Naive thymus-derived CD4-positive, alpha-beta T cell (primary cell): ENCODE measurements at regions of chr21 and their contacts with region 1.

Region 1: GRCh38 chr21:35051287-35051818 is 2.3 kb upstream of the RUNX1 start:
- DNase-seq: peak; percentile 61 to 85 (median 80)
- ATAC-seq: peak; percentile 74
- H3K4me3 ChIP-seq: no peak overlapping the region
- H3K4me3 Mint-ChIP-seq: peak overlapping the region; percentile 70 to 99 (median 94)
- H3K27ac ChIP-seq: peak overlapping the region; percentile 38
- H3K27ac Mint-ChIP-seq: peak overlapping the region; percentile 80 to 100 (median 98)
- H3K4me1 ChIP-seq: peaks cover 29 to 42% of the 10 kb centered on the region in 2 donors
- H3K4me1 Mint-ChIP-seq: peaks cover 37 to 61% (median 47%) of the 10 kb centered on the region in 7 donors
- H3K27me3 ChIP-seq: no peaks in the 10 kb centered on the region
- H3K27me3 Mint-ChIP-seq: peaks cover 0 to 5% (median 0%) of the 10 kb centered on the region in 5 donors

Region 2: DNA sequence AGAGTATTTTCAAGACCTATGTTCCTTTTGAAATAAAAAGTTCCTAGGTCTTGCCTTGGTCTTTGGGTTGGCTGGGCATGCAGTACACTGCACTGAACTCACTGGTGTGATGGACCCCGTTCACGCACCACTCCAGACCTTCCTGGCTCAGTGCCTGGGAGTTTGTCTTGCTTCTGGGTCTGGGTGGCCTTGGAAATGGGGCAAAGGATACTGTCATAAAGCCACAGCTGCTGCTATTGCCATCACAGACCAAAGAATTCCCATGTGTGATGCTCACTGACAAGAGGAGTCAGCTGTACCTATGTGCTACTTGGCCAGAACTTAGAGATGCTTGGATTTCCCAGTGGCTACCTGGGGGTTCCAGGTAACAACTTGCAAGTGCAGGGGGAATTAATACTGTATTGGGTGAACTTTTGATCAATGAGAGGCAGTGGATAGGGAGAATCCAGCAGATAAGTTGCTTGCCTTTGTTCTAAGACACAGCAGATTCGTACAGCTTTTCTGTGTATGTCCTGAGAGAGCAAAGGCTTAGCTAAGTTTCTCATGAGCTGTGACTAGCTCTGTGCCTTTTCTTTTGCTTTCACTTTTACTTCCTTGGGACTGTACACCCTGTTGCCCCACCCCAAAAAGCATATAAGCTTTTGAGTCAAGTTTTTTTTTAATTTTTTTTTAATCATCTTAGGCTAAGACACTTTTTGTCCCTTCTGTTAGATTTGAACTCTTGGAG is 117.6 kb before region 1 on chr21:
- CTCF ChIA-PET with region 1: interaction called, 26 read pairs
- POLR2A ChIA-PET with region 1: interaction called, 36 read pairs
- intact Hi-C with region 1: loop called (anchors 1 kb)
- DNase-seq: peak in 7 of 9 donors; percentile 47 to 83 (median 72)
- ATAC-seq: peak; percentile 94
- H3K4me3 ChIP-seq: peak overlapping the region; percentile 56
- H3K4me3 Mint-ChIP-seq: peak overlapping the region; percentile 39 to 88 (median 78)
- H3K27ac ChIP-seq: peak overlapping the region; percentile 81
- H3K27ac Mint-ChIP-seq: peak overlapping the region; percentile 83 to 97 (median 94)
- H3K4me1 ChIP-seq: peaks cover 52 to 68% of the 10 kb centered on the region in 2 donors
- H3K4me1 Mint-ChIP-seq: peaks cover 70 to 93% (median 89%) of the 10 kb centered on the region in 7 donors
- H3K27me3 ChIP-seq: no peaks in the 10 kb centered on the region
- H3K27me3 Mint-ChIP-seq: no peaks in the 10 kb centered on the region

Region 3: DNA sequence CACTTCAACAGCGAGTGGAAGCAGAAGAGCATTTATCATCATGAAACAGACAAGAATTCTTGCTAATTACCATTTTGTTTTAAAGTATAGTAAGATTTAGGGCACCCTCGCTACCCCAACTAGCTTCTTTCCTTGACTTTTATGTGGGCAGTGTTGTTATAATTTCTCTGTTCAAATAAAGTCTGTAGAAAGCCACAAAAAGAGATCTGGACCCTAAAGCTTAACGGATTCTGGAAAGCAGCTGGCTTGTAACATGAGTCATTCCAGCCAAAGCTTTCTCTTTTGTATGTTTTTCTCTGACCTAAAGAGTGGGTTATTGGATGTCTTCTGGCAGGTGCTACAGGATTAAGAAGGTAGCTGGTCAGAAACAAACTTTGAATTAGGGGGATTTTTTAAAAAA is 39.7 kb before region 1 on chr21:
- CTCF ChIA-PET with region 1: interaction called, 4 read pairs
- POLR2A ChIA-PET with region 1: interaction called, 11 read pairs
- intact Hi-C with region 1: loop called in 1 of 2 experiments (anchors 5 kb)
- DNase-seq: no peak
- ATAC-seq: no peak
- H3K4me3 ChIP-seq: no peak overlapping the region
- H3K4me3 Mint-ChIP-seq: peak overlapping the region; percentile 20 to 79 (median 64)
- H3K27ac ChIP-seq: peak overlapping the region; percentile 28
- H3K27ac Mint-ChIP-seq: peak overlapping the region in 8 of 9 donors; percentile 33 to 85 (median 72)
- H3K4me1 ChIP-seq: peaks cover 36 to 77% of the 10 kb centered on the region in 2 donors
- H3K4me1 Mint-ChIP-seq: peaks cover 58 to 98% (median 96%) of the 10 kb centered on the region in 7 donors
- H3K27me3 ChIP-seq: no peaks in the 10 kb centered on the region
- H3K27me3 Mint-ChIP-seq: no peaks in the 10 kb centered on the region

Region 4: GRCh38 chr21:35102488-35103371 is 51.4 kb after region 1 on chr21:
- CTCF ChIA-PET with region 1: interaction called, 3 read pairs
- POLR2A ChIA-PET with region 1: interaction called, 4 read pairs
- intact Hi-C with region 1: loop called in 1 of 2 experiments (anchors 1 kb)
- DNase-seq: peak in 8 of 9 donors; percentile 13 to 81 (median 78)
- ATAC-seq: peak; percentile 98
- H3K4me3 ChIP-seq: peak overlapping the region; percentile 34
- H3K4me3 Mint-ChIP-seq: no peak overlapping the region
- H3K27ac ChIP-seq: peak overlapping the region; percentile 52
- H3K27ac Mint-ChIP-seq: no peak overlapping the region
- H3K4me1 ChIP-seq: peaks cover 0 to 16% of the 10 kb centered on the region in 2 donors
- H3K4me1 Mint-ChIP-seq: peaks cover 0 to 4% (median 0%) of the 10 kb centered on the region in 7 donors
- H3K27me3 ChIP-seq: no peaks in the 10 kb centered on the region
- H3K27me3 Mint-ChIP-seq: no peaks in the 10 kb centered on the region

Region 5: GRCh38 chr21:35120631-35121186 is 69.4 kb after region 1 on chr21:
- CTCF ChIA-PET with region 1: no interaction called
- POLR2A ChIA-PET with region 1: no interaction called
- intact Hi-C with region 1: no loop called
- DNase-seq: no peak
- ATAC-seq: no peak
- H3K4me3 ChIP-seq: no peak overlapping the region
- H3K4me3 Mint-ChIP-seq: no peak overlapping the region
- H3K27ac ChIP-seq: no peak overlapping the region
- H3K27ac Mint-ChIP-seq: peak overlapping the region in 1 of 9 donors; percentile 43
- H3K4me1 ChIP-seq: no peaks in the 10 kb centered on the region
- H3K4me1 Mint-ChIP-seq: peaks cover 0 to 2% (median 0%) of the 10 kb centered on the region in 7 donors
- H3K27me3 ChIP-seq: no peaks in the 10 kb centered on the region
- H3K27me3 Mint-ChIP-seq: no peaks in the 10 kb centered on the region

Region 6: GRCh38 chr21:35340269-35340668 is 288.9 kb after region 1 on chr21:
- CTCF ChIA-PET with region 1: no interaction called
- POLR2A ChIA-PET with region 1: no interaction called
- intact Hi-C with region 1: loop called in 1 of 2 experiments (anchors 1 kb)
- DNase-seq: peak in 1 of 9 donors; percentile 8
- ATAC-seq: no peak
- H3K4me3 ChIP-seq: no peak overlapping the region
- H3K4me3 Mint-ChIP-seq: no peak overlapping the region
- H3K27ac ChIP-seq: no peak overlapping the region
- H3K27ac Mint-ChIP-seq: no peak overlapping the region
- H3K4me1 ChIP-seq: no peaks in the 10 kb centered on the region
- H3K4me1 Mint-ChIP-seq: peaks cover 0 to 14% (median 5%) of the 10 kb centered on the region in 7 donors
- H3K27me3 ChIP-seq: no peaks in the 10 kb centered on the region
- H3K27me3 Mint-ChIP-seq: peaks cover 0 to 8% (median 0%) of the 10 kb centered on the region in 5 donors

Region 7: GRCh38 chr21:35616090-35616489 is 564.7 kb after region 1 on chr21:
- CTCF ChIA-PET with region 1: interaction called, 5 read pairs
- POLR2A ChIA-PET with region 1: no interaction called
- intact Hi-C with region 1: loop called (anchors 1 to 5 kb)
- DNase-seq: peak in 6 of 9 donors; percentile 2 to 44 (median 28)
- ATAC-seq: no peak
- H3K4me3 ChIP-seq: no peak overlapping the region
- H3K4me3 Mint-ChIP-seq: no peak overlapping the region
- H3K27ac ChIP-seq: no peak overlapping the region
- H3K27ac Mint-ChIP-seq: no peak overlapping the region
- H3K4me1 ChIP-seq: no peaks in the 10 kb centered on the region
- H3K4me1 Mint-ChIP-seq: peaks cover 0 to 6% (median 3%) of the 10 kb centered on the region in 7 donors
- H3K27me3 ChIP-seq: no peaks in the 10 kb centered on the region
- H3K27me3 Mint-ChIP-seq: peaks cover 0 to 11% (median 0%) of the 10 kb centered on the region in 5 donors